ENCODE measurements at regions of chr14 and their contacts with region 1.

Region 1: GRCh38 chr14:50736932-50737419 is 68.9 kb upstream of the SAV1 start:
- DNase-seq: peak in 3 of 9 experiments; percentile 22 to 59 (median 25)
- ATAC-seq: peak; percentile 78
- H3K4me3 ChIP-seq: no peak overlapping the region
- H3K4me3 Mint-ChIP-seq: no peak overlapping the region
- H3K27ac ChIP-seq: peak overlapping the region in 1 of 2 experiments; percentile 53
- H3K27ac Mint-ChIP-seq: peak overlapping the region; percentile 62
- H3K4me1 ChIP-seq: no peaks in the 10 kb centered on the region
- H3K4me1 Mint-ChIP-seq: peaks cover 16% of the 10 kb centered on the region
- H3K27me3 ChIP-seq: no peaks in the 10 kb centered on the region
- H3K27me3 Mint-ChIP-seq: no peaks in the 10 kb centered on the region
- CTCF ChIP-seq: no peak

Region 2: GRCh38 chr14:50756300-50756699 is 19.3 kb after region 1 on chr14:
- CTCF ChIA-PET with region 1: interaction called, 3 read pairs
- POLR2A ChIA-PET with region 1: interaction called, 3 read pairs
- intact Hi-C with region 1: loop called in 1 of 2 experiments (anchors 2 kb)
- DNase-seq: peak in 1 of 9 experiments; percentile 37
- ATAC-seq: no peak
- H3K4me3 ChIP-seq: no peak overlapping the region
- H3K4me3 Mint-ChIP-seq: no peak overlapping the region
- H3K27ac ChIP-seq: no peak overlapping the region
- H3K27ac Mint-ChIP-seq: no peak overlapping the region
- H3K4me1 ChIP-seq: no peaks in the 10 kb centered on the region
- H3K4me1 Mint-ChIP-seq: peaks cover 4% of the 10 kb centered on the region
- H3K27me3 ChIP-seq: no peaks in the 10 kb centered on the region
- H3K27me3 Mint-ChIP-seq: no peaks in the 10 kb centered on the region
- CTCF ChIP-seq: no peak